Activated CD8-positive, alpha-beta memory T cell treated with anti-CD3 and anti-CD28 coated beads, Interleukin-2, amount 10 ng/mL, durations not matched to agents 7 days and 5 days (primary cell): ENCODE measurements at regions of chr1 and their contacts with region 1.

Region 1: DNA sequence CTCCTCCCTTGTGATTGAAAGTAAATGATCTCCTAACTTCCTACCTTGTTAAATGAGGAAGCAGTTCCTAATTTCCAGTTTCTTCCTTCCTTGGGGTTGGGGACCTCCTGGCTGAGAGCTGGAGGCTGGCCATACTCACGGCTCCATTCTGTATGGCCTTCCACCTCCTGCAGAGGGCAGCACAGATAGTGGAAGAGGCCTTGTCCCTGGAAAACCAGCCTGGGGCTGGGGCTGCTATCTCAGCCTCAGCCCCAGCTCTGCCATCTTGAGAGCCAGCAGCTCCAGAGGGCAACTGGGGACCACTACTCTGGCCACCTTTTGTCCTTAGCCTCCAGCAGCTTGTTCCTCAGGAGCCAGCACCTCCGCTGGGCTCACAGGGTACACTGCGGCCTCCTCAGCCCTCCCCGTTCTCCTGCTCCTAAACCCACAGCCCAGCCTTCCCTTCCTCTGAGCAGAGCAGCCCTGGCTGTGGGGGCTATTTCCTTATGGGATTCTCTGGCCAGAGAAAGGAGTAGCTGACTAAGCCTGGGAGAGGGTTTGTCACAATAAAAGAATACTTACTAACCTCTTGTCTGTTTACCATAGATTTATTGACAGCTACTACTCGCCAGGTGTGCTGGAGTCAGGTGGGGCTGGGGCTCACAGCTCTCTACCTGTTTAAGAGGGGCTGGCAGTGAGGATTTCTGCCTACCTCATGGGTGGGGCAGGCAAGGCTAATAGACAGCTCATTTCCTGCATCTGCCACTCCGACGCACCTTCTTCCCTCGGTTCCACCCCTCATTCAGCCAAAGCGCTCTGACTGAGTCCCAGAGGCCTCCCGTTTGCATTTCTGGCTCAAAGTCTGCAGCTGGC is 6.3 kb downstream of the TMEM234 start:
- DNase-seq: peak; percentile 71
- ATAC-seq: peak; percentile 92
- H3K4me3 Mint-ChIP-seq: no peak overlapping the region
- H3K27ac Mint-ChIP-seq: peak overlapping the region; percentile 51
- H3K4me1 Mint-ChIP-seq: peaks cover 10% of the 10 kb centered on the region
- H3K27me3 Mint-ChIP-seq: no peaks in the 10 kb centered on the region

Region 2: DNA sequence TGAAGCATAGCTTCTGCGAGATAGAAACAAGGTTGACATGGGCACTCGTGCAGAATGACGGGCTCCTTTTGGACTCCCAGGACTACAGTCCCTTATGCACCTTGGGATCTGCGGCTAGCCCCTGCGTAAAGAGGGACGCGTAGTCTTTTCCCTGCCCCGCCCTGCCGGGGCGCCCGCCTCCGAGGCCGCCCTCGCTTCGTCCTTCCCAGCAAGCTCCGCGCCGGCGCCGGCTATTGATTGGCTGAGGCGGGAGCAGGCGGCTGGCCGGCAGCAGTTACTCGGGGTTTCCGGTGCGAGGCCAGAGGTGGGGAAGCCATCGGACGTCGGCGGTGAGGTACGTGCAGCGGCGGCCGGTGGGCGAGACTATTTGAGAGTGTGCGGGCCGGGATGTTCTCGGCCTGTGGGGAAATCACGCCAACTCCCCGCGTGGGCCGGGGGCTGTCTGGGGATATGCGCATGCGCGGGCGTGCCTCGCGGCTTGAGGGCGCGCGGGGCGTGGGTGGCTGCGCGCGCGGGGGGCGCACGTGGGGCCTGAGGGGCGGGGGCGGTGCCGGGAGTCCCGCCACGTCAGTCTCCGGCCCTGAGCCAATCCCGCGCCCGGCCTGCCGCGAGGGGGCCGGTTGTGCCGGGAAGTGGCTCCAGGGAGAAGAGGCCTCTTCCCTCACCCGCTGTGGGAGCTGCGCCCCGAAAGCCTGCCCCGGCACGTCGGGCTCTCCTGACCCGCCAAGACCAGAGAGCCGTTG is 36.2 kb before region 1 on chr1 and contains the start of gene TXLNA:
- CTCF ChIA-PET with region 1: interaction called, 18 read pairs
- DNase-seq: peak; percentile 95
- ATAC-seq: peak; percentile 91
- H3K4me3 Mint-ChIP-seq: peak within 1 kb of the TSS; percentile 81
- H3K27ac Mint-ChIP-seq: peak within 1 kb of the TSS; percentile 98
- H3K4me1 Mint-ChIP-seq: peaks cover 41% of the 10 kb centered on the region
- H3K27me3 Mint-ChIP-seq: no peaks in the 10 kb centered on the region
- total RNA-seq, gene TXLNA: 85.8 to 104 TPM

Region 3: DNA sequence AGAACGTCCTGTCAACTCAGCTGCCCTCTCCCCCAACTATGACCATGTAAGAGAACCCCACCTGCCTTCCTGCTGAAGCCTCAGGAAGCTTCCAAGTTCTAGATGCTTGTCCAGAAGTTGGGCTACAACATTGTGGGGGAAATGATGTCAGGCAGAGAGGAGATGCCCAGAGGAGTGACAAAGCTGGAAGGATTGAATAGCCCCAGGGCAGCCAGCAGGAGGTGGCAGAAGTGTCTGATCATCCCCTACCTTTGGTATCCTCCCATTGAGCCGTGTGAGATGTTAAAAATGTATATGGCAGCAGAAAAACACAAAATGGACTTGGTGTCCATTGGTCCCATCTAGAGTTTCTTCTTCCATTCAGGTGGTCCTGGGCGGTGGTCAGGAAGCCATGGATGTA is 12.9 kb after region 1 on chr1:
- CTCF ChIA-PET with region 1: interaction called, 10 read pairs
- DNase-seq: no peak
- ATAC-seq: no peak
- H3K4me3 Mint-ChIP-seq: no peak overlapping the region
- H3K27ac Mint-ChIP-seq: no peak overlapping the region
- H3K4me1 Mint-ChIP-seq: peaks cover 7% of the 10 kb centered on the region
- H3K27me3 Mint-ChIP-seq: no peaks in the 10 kb centered on the region

Region 4: GRCh38 chr1:32240140-32240951 is 24.5 kb after region 1 on chr1:
- CTCF ChIA-PET with region 1: interaction called, 99 read pairs
- DNase-seq: peak; percentile 63
- ATAC-seq: peak; percentile 71
- H3K4me3 Mint-ChIP-seq: peak overlapping the region; percentile 76
- H3K27ac Mint-ChIP-seq: peak overlapping the region; percentile 32
- H3K4me1 Mint-ChIP-seq: peaks cover 21% of the 10 kb centered on the region
- H3K27me3 Mint-ChIP-seq: no peaks in the 10 kb centered on the region

Region 5: GRCh38 chr1:32263744-32264143 is 47.9 kb after region 1 on chr1:
- CTCF ChIA-PET with region 1: interaction called, 15 read pairs
- DNase-seq: peak; percentile 70
- ATAC-seq: peak; percentile 86
- H3K4me3 Mint-ChIP-seq: peak overlapping the region; percentile 22
- H3K27ac Mint-ChIP-seq: peak overlapping the region; percentile 85
- H3K4me1 Mint-ChIP-seq: peaks cover 54% of the 10 kb centered on the region
- H3K27me3 Mint-ChIP-seq: no peaks in the 10 kb centered on the region

Region 6: GRCh38 chr1:32291708-32292492 is 76.0 kb after region 1 on chr1 and contains the start of gene HDAC1:
- CTCF ChIA-PET with region 1: interaction called, 21 read pairs
- DNase-seq: peak; percentile 98
- ATAC-seq: peak; percentile 99
- H3K4me3 Mint-ChIP-seq: peak within 1 kb of the TSS; percentile 99
- H3K27ac Mint-ChIP-seq: peak within 1 kb of the TSS; percentile 98
- H3K4me1 Mint-ChIP-seq: peaks cover 49% of the 10 kb centered on the region
- H3K27me3 Mint-ChIP-seq: no peaks in the 10 kb centered on the region
- total RNA-seq, gene HDAC1: 183 to 189 TPM

Region 7: DNA sequence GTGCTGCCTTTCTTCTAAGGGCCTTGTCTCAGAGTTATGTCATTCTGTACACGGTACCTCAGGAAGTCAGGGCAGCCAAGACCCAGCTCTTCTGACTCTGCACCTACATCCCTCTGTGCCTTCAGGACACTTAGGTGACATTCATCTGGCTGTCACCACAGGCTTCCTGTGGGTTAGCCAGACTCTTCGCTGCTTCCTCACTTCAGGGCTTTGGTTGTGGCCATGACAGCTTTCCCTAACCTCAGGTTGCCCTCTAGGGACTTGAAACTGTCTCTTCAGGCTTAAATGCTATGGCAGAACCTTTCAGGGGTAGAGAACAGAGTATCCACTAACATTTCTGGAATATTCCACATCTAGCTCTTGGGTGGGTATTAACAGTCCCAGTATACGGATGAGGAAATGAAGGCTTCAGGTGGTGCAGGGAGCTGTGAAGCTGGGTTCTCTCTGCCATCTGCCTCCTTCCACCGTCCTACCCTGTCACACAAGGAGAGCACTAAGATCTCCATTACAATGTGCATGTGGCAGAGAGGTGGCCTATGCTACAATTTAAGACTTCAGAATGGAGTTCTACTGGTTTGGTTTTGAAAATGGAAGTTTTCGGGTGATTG is 156.4 kb after region 1 on chr1:
- CTCF ChIA-PET with region 1: interaction called, 19 read pairs
- DNase-seq: peak; percentile 84
- ATAC-seq: peak; percentile 82
- H3K4me3 Mint-ChIP-seq: no peak overlapping the region
- H3K27ac Mint-ChIP-seq: peak overlapping the region; percentile 5
- H3K4me1 Mint-ChIP-seq: peaks cover 20% of the 10 kb centered on the region
- H3K27me3 Mint-ChIP-seq: no peaks in the 10 kb centered on the region